MCF 10A (cell line): ENCODE measurements at regions of chr11 and their contacts with region 1.

Region 1: DNA sequence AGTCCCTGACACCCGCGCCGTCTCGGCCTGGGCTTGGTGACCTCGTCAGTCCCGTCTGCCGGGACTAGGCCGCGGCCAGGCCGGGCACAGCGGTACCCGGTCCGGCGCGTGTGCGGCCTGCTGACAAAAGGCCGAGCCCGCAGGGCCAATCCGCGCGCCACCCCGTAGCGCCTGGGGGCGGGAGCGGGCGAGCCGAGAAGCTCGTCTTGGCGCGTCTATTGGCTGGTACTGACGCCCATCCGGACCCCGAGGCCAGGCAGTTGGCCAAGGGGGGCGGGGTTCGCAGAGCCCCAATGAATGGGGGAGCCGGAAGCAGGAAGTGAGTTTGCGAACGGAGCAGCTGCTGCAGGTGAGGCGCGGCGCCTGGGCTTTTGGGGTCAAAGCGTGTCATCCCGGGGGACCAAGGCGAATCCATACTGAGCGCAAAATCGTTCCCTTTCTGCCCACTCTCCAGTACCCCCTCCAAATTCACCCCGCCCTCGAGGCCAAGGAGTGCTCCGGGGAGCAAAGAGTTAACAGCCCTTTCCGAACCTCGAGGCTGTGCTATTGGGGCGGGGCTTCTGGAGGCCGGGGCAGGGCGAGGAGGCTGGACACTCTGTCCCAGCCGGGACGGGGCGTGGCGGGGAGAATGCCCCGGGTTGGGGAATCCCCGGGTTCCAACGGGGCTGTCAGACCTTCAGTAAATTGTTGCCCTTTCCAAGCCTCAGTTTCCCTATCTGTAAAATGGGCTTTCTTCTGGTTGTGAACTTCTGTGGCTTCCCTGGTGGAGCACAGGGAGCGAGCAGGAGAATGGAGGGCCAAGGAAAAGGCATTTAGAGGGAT is at the start of gene DPP3:
- DNase-seq: peak; percentile 98
- H3K4me3 Mint-ChIP-seq: peak within 1 kb of the TSS; percentile 96
- H3K27ac Mint-ChIP-seq: peak within 1 kb of the TSS; percentile 95
- H3K4me1 Mint-ChIP-seq: peaks cover 23% of the 10 kb centered on the region
- H3K27me3 Mint-ChIP-seq: no peaks in the 10 kb centered on the region
- CTCF ChIP-seq: no peak
- total RNA-seq, gene DPP3: 34.4 and 40.9 TPM in 2 replicates

Region 2: DNA sequence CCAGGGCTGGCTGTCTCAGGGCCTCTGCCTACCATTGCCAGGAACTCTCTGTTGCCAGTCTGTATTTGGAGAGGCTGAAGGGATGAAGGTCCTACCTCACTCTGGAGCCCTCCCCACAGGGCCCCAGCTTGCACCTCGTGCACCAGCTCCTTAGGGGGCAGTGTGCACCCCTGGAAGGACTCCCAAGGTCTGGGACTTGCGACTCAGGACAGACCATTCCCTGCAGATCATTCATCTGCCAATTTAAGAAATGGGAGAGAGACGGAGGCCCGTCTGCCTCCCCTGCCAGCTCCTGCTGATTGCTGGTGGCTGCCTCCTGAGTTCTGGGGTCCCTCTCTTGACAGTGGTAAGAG is 1008.9 kb before region 1 on chr11:
- CTCF ChIA-PET with region 1: no interaction called
- POLR2A ChIA-PET with region 1: no interaction called
- intact Hi-C with region 1: no loop called
- DNase-seq: peak; percentile 85
- H3K4me3 Mint-ChIP-seq: no peak overlapping the region
- H3K27ac Mint-ChIP-seq: peak overlapping the region; percentile 97
- H3K4me1 Mint-ChIP-seq: peaks cover 15% of the 10 kb centered on the region
- H3K27me3 Mint-ChIP-seq: no peaks in the 10 kb centered on the region
- CTCF ChIP-seq: peak; percentile 25

Region 3: DNA sequence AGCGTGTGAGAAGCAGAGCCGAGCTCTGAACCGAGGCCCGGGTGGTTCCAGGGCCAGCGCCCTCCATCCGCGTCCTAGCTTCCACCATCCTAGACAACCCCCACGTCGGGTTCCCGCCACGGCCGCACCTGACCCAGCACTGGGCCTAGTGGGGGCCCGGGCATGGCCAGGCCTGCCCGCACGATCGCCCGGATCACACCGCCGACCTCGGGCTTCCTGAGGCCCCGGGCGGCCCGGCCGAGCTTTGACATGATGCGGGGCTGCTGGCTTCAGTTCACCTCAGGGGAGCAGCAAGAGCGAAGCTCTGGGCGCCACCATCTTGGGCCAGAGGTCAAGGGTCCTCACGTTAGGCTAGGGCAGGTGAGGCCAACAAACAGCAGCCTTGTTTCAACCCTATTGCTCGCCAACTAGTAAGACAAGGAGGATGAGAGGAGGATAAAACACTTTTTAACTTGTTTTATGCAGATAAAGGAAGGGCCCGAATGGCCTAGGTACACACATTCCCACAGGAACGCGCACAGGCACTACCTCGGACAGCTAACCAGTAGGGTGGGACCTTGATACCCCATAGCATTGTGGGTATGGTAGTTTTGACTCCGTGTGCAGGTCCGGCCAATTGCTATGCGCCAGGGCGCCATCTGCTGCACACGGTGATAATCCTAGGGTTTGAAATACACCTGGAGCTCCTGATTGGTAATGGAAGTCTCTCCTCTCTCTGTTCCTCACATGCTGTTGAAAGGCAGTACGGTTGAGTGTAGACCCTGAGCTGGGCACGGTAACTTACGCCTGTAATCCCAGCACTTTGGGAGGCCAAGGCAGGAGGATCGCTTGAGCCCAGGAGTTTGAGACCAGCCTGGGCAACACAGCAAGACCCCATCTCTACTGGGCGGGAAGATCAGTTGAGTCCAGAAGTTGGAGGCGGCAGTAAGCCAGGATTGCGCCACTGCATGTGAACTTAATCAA is 41.5 kb before region 1 on chr11 and contains the start of gene MRPL11:
- CTCF ChIA-PET with region 1: interaction called, 5 read pairs
- POLR2A ChIA-PET with region 1: interaction called, 25 read pairs
- intact Hi-C with region 1: loop called (anchors 1 kb)
- DNase-seq: peak; percentile 95
- H3K4me3 Mint-ChIP-seq: peak within 1 kb of the TSS; percentile 84
- H3K27ac Mint-ChIP-seq: peak within 1 kb of the TSS; percentile 97
- H3K4me1 Mint-ChIP-seq: peaks cover 18% of the 10 kb centered on the region
- H3K27me3 Mint-ChIP-seq: no peaks in the 10 kb centered on the region
- CTCF ChIP-seq: peak; percentile 62
- total RNA-seq, gene MRPL11: 65.5 and 69.1 TPM in 2 replicates

Region 4: GRCh38 chr11:66510271-66510989 is 30.1 kb after region 1 on chr11 and contains the start of gene BBS1:
- CTCF ChIA-PET with region 1: no interaction called
- POLR2A ChIA-PET with region 1: interaction called, 21 read pairs
- intact Hi-C with region 1: no loop called
- DNase-seq: peak; percentile 72
- H3K4me3 Mint-ChIP-seq: peak within 1 kb of the TSS; percentile 98
- H3K27ac Mint-ChIP-seq: peak within 1 kb of the TSS; percentile 88
- H3K4me1 Mint-ChIP-seq: peaks cover 11% of the 10 kb centered on the region
- H3K27me3 Mint-ChIP-seq: no peaks in the 10 kb centered on the region
- CTCF ChIP-seq: no peak
- total RNA-seq, gene BBS1: 31.7 and 33.9 TPM in 2 replicates

Region 5: GRCh38 chr11:66568124-66568916 is 88.0 kb after region 1 on chr11 and contains the start of gene CTSF:
- CTCF ChIA-PET with region 1: no interaction called
- POLR2A ChIA-PET with region 1: interaction called, 10 read pairs
- intact Hi-C with region 1: no loop called
- DNase-seq: peak; percentile 82
- H3K4me3 Mint-ChIP-seq: peak within 1 kb of the TSS; percentile 71
- H3K27ac Mint-ChIP-seq: peak within 1 kb of the TSS; percentile 77
- H3K4me1 Mint-ChIP-seq: peaks cover 7% of the 10 kb centered on the region
- H3K27me3 Mint-ChIP-seq: peaks cover under 1% of the 10 kb centered on the region
- CTCF ChIP-seq: no peak
- total RNA-seq, gene CTSF: 8.6 and 11.8 TPM in 2 replicates

Region 6: DNA sequence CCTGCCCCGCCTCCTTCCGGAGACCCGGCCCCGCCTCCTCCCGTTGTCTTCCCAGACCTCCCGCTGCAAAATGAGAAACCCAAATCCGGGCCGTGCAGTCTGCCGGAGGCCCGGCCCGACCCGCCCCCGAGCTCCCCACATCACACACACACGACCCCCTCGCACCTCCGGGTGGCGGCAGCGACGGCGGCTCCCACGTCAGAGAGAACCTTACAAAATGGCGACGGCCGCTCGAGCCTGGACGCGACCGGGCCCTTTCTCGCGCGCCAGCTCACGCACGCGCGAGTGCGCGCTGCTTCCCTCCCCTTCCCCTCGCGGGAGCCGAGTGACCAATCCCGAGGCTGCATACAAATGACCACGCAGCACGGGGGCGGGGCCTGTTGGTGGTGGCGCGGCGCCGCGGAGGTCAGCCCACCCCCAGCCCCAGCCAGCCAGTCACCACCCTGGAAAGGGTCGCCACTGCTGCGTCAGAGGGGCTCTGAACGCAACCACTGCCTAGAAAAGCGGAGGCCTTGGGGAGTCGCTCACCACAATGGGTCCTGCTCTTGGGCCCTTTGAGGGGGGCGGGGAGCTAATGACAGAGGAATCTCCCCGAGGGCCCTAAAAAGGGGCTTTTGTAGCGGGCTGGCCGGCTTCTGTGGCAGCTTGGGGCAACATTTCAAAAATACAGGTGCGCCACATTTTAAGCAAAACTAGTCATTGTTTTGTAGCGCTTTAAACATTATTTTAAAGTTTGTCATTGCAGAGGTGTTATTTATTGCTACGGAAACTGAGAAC is 197.5 kb after region 1 on chr11 and contains the start of gene RBM4B:
- CTCF ChIA-PET with region 1: interaction called, 3 read pairs
- POLR2A ChIA-PET with region 1: interaction called, 24 read pairs
- intact Hi-C with region 1: loop called (anchors 1 kb)
- DNase-seq: peak; percentile 91
- H3K4me3 Mint-ChIP-seq: peak within 1 kb of the TSS; percentile 89
- H3K27ac Mint-ChIP-seq: peak within 1 kb of the TSS; percentile 98
- H3K4me1 Mint-ChIP-seq: peaks cover 18% of the 10 kb centered on the region
- H3K27me3 Mint-ChIP-seq: no peaks in the 10 kb centered on the region
- CTCF ChIP-seq: no peak
- total RNA-seq, gene RBM4B: 9.5 and 13.5 TPM in 2 replicates